Left ventricle myocardium superior (tissue), 1 donor: ENCODE measurements at regions of chr11 and their contacts with region 1.

Region 1: GRCh38 chr11:130979386-130979972 is 63.2 kb upstream of the SNX19 start:
- DNase-seq: no peak
- ATAC-seq: no peak

Region 2: DNA sequence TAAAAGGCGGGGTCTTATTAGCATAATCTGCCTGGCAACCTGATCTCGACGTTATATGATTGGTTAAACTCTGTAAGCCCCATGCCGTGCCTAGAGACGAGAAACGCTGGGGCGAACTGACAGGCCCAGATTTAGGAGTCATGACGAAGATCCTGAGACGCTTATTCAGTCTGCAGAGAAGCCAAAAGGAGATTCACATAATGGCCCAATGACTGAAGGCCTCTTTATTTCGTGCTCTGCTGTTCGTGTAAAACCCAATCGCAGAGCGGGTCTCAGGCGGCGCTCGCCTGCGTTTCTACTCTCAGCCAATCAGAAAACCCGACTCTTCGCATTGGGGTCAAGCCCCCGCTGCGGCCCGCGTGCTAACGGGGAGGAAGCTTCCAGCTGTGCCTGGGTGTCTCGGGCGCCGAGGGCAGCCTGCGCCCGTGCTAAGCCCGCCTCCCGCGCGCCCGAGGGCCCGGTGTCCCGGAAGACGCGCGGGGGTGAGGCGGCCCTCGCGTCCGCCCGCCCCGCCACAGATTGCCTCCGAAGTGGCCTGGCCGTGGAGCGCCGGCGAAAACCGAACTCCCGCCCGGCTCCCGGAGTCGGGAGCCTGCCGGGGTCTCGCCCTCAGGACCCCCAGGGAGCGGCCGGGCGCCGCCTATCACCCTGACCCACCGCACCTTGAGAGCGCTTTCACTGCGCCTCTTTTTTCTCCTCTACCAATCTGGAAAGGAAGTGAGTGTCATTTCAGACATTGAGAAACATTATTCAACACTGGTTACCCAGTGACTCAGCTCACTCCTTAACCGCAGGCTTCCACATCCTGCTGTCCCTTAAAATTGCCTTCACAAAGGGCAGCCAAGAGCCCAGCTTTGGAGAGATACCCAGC is 976.4 kb before region 1 on chr11:
- intact Hi-C with region 1: no loop called
- DNase-seq: peak; percentile 95
- ATAC-seq: peak; percentile 90

Region 3: GRCh38 chr11:130571519-130571918 is 408.0 kb before region 1 on chr11:
- intact Hi-C with region 1: no loop called
- DNase-seq: no peak
- ATAC-seq: no peak

Region 4: GRCh38 chr11:130760515-130761125 is 218.9 kb before region 1 on chr11:
- intact Hi-C with region 1: no loop called
- DNase-seq: no peak
- ATAC-seq: no peak

Region 5: DNA sequence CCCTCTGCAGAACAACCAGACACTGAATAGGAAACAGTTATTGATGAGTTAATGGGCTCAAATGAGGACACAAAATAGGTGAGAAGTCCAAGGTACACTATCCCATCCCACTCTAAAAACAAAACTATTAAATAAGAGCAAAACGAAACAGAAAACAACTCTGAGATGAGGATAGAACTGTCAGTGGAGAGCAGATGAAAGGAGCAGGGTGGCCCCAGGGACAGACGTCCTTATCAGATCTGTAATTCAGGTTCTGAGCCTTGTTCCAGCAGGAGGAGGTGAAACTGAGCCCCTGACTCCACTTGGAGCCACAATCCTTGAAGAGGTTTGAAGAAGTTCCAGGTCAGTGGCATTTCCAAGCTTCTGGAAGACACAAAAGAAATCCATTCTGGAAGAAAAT is 54.7 kb before region 1 on chr11:
- intact Hi-C with region 1: loop called (anchors 10 kb)
- DNase-seq: no peak
- ATAC-seq: no peak

Region 6: DNA sequence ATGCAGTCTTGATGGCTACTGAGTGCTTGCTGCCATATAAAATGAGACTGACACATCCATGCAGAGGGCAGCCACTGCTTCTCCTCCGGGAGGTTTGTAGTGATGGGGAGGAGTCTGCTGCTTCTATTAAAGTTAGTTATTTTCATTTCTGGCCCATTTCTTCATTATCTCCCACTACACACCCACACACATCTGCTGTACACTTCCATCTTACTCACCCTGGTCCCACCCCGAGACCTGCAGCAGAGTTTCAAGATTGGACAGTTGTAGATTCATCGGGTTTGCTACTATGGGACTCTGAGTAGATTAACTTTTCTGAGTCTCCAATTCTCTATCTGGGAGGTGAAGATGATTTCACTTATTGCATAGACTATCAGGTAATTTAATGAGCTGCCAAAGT is 113.0 kb after region 1 on chr11:
- intact Hi-C with region 1: no loop called
- DNase-seq: no peak
- ATAC-seq: no peak